GM12878 (cell line): ENCODE measurements at regions of chr7 and their contacts with region 1.

Region 1: GRCh38 chr7:38186593-38187314 is 8.7 kb downstream of the STARD3NL start:
- DNase-seq: no peak
- ATAC-seq: peak; percentile 55
- H3K4me3 ChIP-seq: no peak overlapping the region
- H3K27ac ChIP-seq: no peak overlapping the region
- H3K4me1 ChIP-seq: peaks cover 39% of the 10 kb centered on the region
- H3K27me3 ChIP-seq: no peaks in the 10 kb centered on the region
- CTCF ChIP-seq: no peak
- EP300 ChIP-seq: no peak
- POLR2A ChIP-seq: no peak
- RAD21 ChIP-seq: no peak

Region 2: GRCh38 chr7:38169847-38170246 is 16.9 kb before region 1 on chr7:
- CTCF ChIA-PET with region 1: interaction called, 3 read pairs
- POLR2A ChIA-PET with region 1: interaction called, 4 read pairs
- RAD21 ChIA-PET with region 1: interaction called, 11 read pairs
- SMC1A ChIA-PET with region 1: interaction called, 42 read pairs
- in situ Hi-C with region 1: no loop called
- intact Hi-C with region 1: no loop called
- DNase-seq: peak; percentile 85
- ATAC-seq: peak; percentile 82
- H3K4me3 ChIP-seq: 0 out of 2 replicates have a peak overlapping the region, but pooled peaks have one; percentile 6
- H3K27ac ChIP-seq: peak overlapping the region; percentile 57
- H3K4me1 ChIP-seq: peaks cover 34% of the 10 kb centered on the region
- H3K27me3 ChIP-seq: no peaks in the 10 kb centered on the region
- CTCF ChIP-seq: no peak
- EP300 ChIP-seq: peak; percentile 38 to 83; a peak in 3 of 4 replicates
- POLR2A ChIP-seq: no peak
- RAD21 ChIP-seq: no peak

Region 3: DNA sequence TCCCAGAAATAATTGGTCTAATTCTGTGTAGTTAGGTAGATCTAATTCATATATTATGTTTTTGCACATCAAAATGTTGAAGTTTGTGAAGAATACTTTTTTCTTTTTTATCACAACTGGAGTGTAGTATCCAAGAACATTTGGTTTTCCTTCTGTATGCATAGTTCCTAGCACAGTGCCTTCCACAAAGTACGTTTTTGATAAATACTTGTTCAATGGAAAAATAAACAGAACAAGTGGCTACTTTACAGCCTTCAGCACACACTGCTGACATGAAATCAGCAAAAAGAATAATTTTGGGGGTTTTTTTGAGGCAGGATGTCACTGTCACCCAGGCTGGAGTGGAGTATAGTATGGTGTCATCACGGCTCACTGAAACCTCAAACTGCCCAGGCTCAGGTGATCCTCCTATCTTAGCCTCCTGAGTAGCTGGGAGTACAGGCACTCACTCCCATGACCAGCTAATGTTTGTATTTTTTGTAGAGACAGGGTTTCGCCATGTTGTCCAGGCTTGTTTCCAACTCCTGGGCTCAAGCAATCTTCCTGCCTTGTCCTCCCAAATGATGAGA is 58.7 kb after region 1 on chr7:
- CTCF ChIA-PET with region 1: no interaction called
- POLR2A ChIA-PET with region 1: no interaction called
- RAD21 ChIA-PET with region 1: no interaction called
- SMC1A ChIA-PET with region 1: no interaction called
- in situ Hi-C with region 1: no loop called
- intact Hi-C with region 1: no loop called
- DNase-seq: no peak
- ATAC-seq: peak; percentile 48
- H3K4me3 ChIP-seq: no peak overlapping the region
- H3K27ac ChIP-seq: no peak overlapping the region
- H3K4me1 ChIP-seq: no peaks in the 10 kb centered on the region
- H3K27me3 ChIP-seq: no peaks in the 10 kb centered on the region
- CTCF ChIP-seq: no peak
- EP300 ChIP-seq: no peak
- POLR2A ChIP-seq: no peak
- RAD21 ChIP-seq: no peak